G401 (cell line): ENCODE measurements at regions of chr3 and their contacts with region 1.

Region 1: GRCh38 chr3:116140100-116140689 is 305.1 kb downstream of the LSAMP start:
- DNase-seq: no peak

Region 2: DNA sequence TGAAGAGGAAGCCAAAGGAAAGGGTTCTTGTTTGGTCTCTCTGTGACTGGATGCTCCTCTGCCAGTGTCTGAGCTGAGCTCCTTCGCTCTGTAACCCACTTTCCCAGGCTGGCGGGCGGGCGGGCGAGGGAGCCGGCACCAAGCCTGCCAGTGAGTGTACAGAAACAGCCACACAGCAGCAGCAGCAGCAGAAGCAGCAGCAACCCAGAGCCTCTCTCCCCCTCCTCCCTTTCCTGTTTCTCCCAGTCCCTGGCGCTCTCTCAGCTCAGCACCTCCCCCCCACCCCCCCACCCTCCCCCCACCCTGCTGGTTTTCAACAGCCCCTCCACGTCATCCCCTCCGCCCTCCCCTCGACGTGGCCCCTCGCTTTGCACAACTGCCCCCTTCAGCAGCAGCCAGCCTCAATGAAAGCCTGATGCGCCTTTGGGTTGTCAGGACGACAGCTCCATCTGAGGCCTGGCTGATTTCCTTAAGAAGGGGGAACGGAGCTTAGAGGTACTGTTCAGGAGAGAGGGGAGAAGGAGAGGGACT is 305.2 kb after region 1 on chr3 and contains the start of gene LSAMP:
- in situ Hi-C with region 1: loop called (anchors 25 kb)
- DNase-seq: peak; percentile 85
- total RNA-seq, gene LSAMP: 21.5 and 45.1 TPM in 2 replicates

Region 3: DNA sequence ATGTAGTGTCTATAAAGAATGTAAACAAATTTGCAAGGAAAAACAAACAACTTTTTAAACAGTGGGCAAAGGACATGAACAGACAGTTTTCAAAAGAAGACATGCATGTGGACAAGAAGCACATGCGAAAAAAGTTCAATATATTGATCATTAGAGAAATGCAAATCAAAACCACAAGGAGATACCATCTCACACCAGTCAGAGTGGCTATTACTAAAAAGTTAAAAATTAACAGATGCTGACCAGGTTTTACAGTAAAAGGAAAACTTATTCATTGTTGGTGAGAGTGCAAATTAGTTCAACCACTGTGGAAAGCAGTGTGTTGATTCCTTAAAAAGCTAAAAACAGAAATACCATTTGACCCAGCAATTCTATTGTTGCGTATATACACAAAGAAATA is 352.2 kb after region 1 on chr3:
- in situ Hi-C with region 1: no loop called
- DNase-seq: no peak